ENCODE measurements at regions of chr9 and their contacts with region 1.

Region 1: GRCh38 chr9:38641985-38642864 is 21.8 kb upstream of the ANKRD18A start:
- DNase-seq: no peak
- ATAC-seq: peak; percentile 56
- H3K4me3 ChIP-seq: no peak overlapping the region
- H3K4me3 Mint-ChIP-seq: no peak overlapping the region
- H3K27ac ChIP-seq: no peak overlapping the region
- H3K27ac Mint-ChIP-seq: no peak overlapping the region
- H3K4me1 ChIP-seq: no peaks in the 10 kb centered on the region
- H3K4me1 Mint-ChIP-seq: peaks cover 0 to 4% (median 0%) of the 10 kb centered on the region in 7 donors
- H3K27me3 ChIP-seq: no peaks in the 10 kb centered on the region
- H3K27me3 Mint-ChIP-seq: peaks cover 0 to 14% (median 8%) of the 10 kb centered on the region in 5 donors

Region 2: GRCh38 chr9:38620483-38621433 is 21.5 kb before region 1 on chr9 and contains the start of gene ANKRD18A:
- CTCF ChIA-PET with region 1: interaction called, 7 read pairs
- POLR2A ChIA-PET with region 1: no interaction called
- intact Hi-C with region 1: loop called in 1 of 2 experiments (anchors 2 kb)
- DNase-seq: peak; percentile 45 to 74 (median 66)
- ATAC-seq: peak; percentile 88
- H3K4me3 ChIP-seq: peak within 1 kb of the TSS; percentile 68
- H3K4me3 Mint-ChIP-seq: peak within 1 kb of the TSS; percentile 84 to 95 (median 89)
- H3K27ac ChIP-seq: peak within 1 kb of the TSS; percentile 51
- H3K27ac Mint-ChIP-seq: peak within 1 kb of the TSS in 5 of 9 donors; percentile 53 to 93 (median 78)
- H3K4me1 ChIP-seq: peaks cover 0 to 5% of the 10 kb centered on the region in 2 donors
- H3K4me1 Mint-ChIP-seq: peaks cover 7 to 15% (median 14%) of the 10 kb centered on the region in 7 donors
- H3K27me3 ChIP-seq: no peaks in the 10 kb centered on the region
- H3K27me3 Mint-ChIP-seq: peaks cover 0 to 53% (median 15%) of the 10 kb centered on the region in 5 donors
- total RNA-seq, gene ANKRD18A: 2.4 to 14.9 (median 8.5) TPM

Measured in naive thymus-derived CD4-positive, alpha-beta T cell (primary cell).